Mammary epithelial cell (primary cell): ENCODE measurements at regions of chr3 and their contacts with region 1.

Region 1: DNA sequence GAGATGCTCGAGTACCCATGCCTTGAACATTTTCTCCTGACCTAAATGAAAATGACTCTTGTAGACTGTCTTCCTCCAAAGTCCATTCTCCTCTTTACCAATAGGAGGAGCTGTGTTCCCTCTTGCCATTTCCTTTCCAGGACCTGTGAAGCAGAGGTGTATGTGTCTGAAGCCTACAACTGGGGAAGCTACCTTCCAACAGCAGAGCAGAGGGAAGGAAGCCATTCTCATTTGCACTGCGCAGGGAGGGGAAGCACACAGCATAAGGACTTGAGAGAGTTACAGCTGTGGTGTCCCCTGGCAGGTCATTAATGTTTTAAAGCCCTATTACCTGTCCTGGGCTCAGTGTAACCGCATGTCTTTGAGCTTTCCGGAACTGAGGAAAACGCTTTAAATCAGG is 38.7 kb downstream of the HSPBAP1 start:
- DNase-seq: peak; percentile 58
- H3K4me3 ChIP-seq: no peak overlapping the region
- H3K27ac ChIP-seq: no peak overlapping the region
- H3K4me1 ChIP-seq: peaks cover 3% of the 10 kb centered on the region
- H3K27me3 ChIP-seq: no peaks in the 10 kb centered on the region
- CTCF ChIP-seq: peak; percentile 93 to 98

Region 2: DNA sequence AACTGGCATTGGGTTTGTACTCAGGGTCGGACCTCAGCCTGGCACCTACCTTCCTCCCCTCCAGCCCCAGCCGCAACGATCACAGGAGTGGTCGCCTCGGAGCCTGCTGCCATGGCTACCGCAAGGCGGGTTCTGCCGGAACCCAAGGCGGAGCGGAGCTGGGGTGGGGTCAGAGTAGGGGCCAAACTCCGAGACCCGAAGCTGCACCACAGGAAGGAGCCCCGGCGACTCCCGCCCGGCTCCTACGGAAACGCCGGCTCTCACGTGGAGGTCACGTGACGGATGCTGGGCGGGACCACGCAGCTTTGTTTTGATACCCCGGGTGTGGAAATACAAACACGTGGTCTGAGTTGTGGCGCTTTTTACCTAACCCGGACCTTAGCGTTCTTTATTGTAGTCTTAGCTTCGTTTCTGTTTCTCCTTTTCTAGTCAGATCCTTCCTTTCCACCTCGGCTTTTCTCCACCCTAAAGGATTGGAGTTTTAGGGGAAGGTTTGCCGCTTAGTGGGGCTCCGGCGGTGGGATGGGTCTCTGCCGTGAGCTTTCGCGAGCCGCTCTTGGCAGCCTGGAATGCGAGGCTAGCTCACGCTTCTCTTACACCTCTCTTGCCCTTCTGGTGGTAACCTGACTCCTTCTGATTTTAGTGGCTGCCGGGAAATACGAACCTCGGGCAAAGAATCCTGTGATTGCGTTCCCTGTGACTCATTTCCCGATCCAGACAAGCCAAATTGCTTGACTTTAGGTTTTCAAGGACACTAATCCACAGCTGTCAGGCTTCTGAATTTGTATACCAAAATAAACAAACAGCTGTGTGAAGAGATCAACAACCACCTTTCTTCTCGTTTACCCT is 38.9 kb after region 1 on chr3 and contains the start of gene HSPBAP1:
- CTCF ChIA-PET with region 1: no interaction called
- dilution Hi-C with region 1: no loop called
- in situ Hi-C with region 1: no loop called
- intact Hi-C with region 1: loop called (anchors 2 kb)
- DNase-seq: peak; percentile 92
- H3K4me3 ChIP-seq: peak within 1 kb of the TSS; percentile 72 to 85 (median 81)
- H3K27ac ChIP-seq: peak within 1 kb of the TSS; percentile 94
- H3K4me1 ChIP-seq: peaks cover 49% of the 10 kb centered on the region
- H3K27me3 ChIP-seq: no peaks in the 10 kb centered on the region
- CTCF ChIP-seq: no peak
- total RNA-seq, gene HSPBAP1: 9.2 to 9.6 TPM

Region 3: DNA sequence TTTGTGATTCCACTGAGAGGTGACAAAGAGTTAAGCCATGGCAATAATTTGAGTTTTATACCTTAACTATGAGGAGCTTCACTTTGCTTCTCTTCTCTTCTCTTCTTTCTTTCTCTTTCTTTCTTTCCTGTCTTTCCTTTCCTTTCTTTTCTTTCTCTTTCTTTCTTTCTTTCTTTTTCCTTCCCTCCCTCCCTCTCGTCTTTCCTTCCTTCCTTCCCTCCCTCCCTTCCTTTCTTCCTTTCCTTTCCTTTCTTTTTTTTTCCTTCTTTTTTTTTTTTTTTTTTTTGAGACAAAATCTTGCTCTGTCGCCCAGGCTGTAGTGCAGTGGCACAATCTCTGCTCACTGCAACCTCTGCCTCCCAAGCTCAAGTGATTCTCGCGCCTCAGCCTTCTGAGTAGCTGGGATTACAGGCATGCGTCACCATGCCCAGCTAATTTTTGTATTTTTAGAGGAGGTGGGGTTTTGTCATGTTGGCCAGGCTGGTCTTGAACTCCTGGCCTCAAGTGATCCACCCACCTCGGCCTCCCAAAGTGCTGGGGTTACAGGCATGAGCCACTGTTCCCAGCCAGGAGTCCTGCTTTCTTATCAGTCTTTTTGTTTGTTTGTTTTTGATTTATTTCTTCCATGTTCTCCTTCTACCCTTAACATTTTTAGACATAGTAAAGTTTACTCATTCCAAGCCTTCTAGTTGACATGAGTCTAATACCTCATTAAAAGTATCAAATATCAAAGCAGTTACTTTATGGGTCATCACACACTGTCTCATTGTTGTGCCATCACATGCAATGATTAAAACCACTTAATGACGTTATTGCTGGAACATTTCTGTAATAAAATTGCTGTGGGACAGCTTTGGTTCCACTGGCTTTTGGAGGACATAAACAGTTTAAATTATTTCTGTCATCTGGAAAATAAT is 69.8 kb after region 1 on chr3:
- CTCF ChIA-PET with region 1: interaction called, 10 read pairs
- dilution Hi-C with region 1: no loop called
- in situ Hi-C with region 1: no loop called
- intact Hi-C with region 1: no loop called
- DNase-seq: peak; percentile 35
- H3K4me3 ChIP-seq: no peak overlapping the region
- H3K27ac ChIP-seq: no peak overlapping the region
- H3K4me1 ChIP-seq: no peaks in the 10 kb centered on the region
- H3K27me3 ChIP-seq: no peaks in the 10 kb centered on the region
- CTCF ChIP-seq: no peak

Region 4: DNA sequence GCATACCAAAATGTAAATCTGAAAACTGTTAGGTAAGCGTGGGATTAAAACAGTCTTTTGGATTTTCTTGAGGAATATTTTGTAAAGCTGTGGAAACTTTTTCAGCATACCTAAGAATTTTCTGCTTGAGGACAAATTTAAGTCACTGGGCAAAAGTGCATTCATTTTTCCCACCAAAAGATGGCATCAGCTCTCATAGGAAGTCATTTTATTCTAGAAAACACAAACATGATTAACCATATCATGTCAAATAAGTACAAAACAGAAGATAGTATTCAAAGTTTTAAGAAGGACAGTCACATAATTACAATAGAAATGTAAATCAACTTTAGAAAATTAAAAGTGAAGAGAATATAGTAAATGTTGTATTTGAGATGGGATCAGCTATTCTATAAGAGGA is 103.4 kb after region 1 on chr3:
- CTCF ChIA-PET with region 1: no interaction called
- dilution Hi-C with region 1: no loop called
- in situ Hi-C with region 1: no loop called
- intact Hi-C with region 1: loop called (anchors 1 kb)
- DNase-seq: peak; percentile 32
- H3K4me3 ChIP-seq: no peak overlapping the region
- H3K27ac ChIP-seq: no peak overlapping the region
- H3K4me1 ChIP-seq: no peaks in the 10 kb centered on the region
- H3K27me3 ChIP-seq: no peaks in the 10 kb centered on the region
- CTCF ChIP-seq: peak; percentile 52 to 59

Region 5: GRCh38 chr3:122942937-122943827 is 188.3 kb after region 1 on chr3:
- CTCF ChIA-PET with region 1: no interaction called
- dilution Hi-C with region 1: no loop called
- in situ Hi-C with region 1: no loop called
- intact Hi-C with region 1: loop called (anchors 1 kb)
- DNase-seq: peak; percentile 52
- H3K4me3 ChIP-seq: no peak overlapping the region
- H3K27ac ChIP-seq: no peak overlapping the region
- H3K4me1 ChIP-seq: peaks cover 17% of the 10 kb centered on the region
- H3K27me3 ChIP-seq: no peaks in the 10 kb centered on the region
- CTCF ChIP-seq: peak; percentile 71 to 93

Region 6: GRCh38 chr3:123044981-123045763 is 290.2 kb after region 1 on chr3:
- CTCF ChIA-PET with region 1: interaction called, 14 read pairs
- dilution Hi-C with region 1: no loop called
- in situ Hi-C with region 1: loop called in 1 of 2 experiments (anchors 25 kb)
- intact Hi-C with region 1: no loop called
- DNase-seq: no peak
- H3K4me3 ChIP-seq: no peak overlapping the region
- H3K27ac ChIP-seq: no peak overlapping the region
- H3K4me1 ChIP-seq: no peaks in the 10 kb centered on the region
- H3K27me3 ChIP-seq: no peaks in the 10 kb centered on the region
- CTCF ChIP-seq: no peak

Region 7: DNA sequence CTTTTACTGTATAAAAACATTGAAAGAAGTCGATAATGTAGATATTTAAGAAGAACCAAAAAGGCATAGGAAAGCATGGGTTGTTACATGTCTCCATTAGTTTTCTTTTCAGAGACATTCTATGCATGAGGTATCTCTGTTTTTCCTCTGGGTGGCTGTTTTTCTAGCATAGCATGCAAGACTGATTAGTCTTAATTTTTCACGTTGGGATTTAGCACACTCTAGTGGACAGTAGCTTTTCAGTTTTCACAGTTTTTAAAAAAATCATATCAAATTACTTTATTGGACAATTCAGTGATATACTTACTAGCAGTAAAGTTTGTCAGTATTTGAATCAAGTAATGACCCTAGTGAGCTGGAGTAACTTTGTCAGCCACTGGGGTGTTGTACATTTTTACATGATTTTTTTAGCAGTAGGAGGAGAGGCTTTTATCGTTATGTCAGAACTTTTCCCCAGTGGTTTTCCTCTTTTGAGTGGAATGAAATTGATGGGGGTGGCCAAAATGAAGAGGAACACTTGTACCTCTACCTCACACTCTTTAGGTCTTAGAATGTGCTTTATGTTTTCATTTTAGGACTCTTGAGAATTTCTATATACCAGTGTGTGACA is 504.0 kb after region 1 on chr3:
- CTCF ChIA-PET with region 1: interaction called, 4 read pairs
- dilution Hi-C with region 1: no loop called
- in situ Hi-C with region 1: no loop called
- intact Hi-C with region 1: loop called (anchors 5 kb)
- DNase-seq: peak; percentile 41
- H3K4me3 ChIP-seq: no peak overlapping the region
- H3K27ac ChIP-seq: no peak overlapping the region
- H3K4me1 ChIP-seq: peaks cover 4% of the 10 kb centered on the region
- H3K27me3 ChIP-seq: no peaks in the 10 kb centered on the region
- CTCF ChIP-seq: peak; percentile 39 to 61